PC-3 (cell line): ENCODE measurements at regions of chr22 and their contacts with region 1.

Region 1: DNA sequence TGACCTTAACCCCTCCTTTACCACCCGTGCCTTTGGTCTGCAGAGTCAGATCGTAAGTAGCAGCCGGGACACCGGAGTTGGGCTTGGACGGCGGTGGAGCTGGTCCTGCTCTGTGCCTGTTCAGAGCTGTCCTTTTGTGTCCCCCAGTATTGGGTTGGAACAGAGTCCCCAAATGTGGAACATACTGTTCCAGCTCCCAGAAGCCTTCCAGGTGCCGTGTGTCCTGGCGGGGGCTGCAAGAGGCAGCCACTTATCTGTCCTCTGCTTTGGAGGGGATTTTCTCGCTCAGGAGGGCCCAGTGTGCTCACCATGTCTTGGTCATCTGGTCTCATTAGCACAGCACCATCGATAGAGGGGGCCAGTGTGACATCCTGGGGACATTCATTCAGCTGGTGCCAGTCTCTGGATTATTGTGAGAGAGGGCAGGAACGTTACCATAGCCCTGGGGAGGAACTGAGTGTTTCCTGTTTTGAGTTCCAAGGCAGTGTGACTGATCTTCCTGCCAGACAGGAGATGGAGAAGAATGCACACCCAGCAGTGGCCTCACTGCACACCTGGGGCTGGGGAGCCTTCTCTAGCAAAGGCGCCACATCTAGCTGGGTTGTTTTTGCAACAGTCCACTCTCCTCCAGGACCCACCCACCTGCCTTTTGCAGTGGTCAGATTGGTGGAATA is 12.4 kb downstream of the CRELD2 start:
- DNase-seq: peak; percentile 85
- ATAC-seq: peak; percentile 76
- H3K4me3 ChIP-seq: no peak overlapping the region
- H3K27ac ChIP-seq: no peak overlapping the region
- H3K4me1 ChIP-seq: peaks cover 18% of the 10 kb centered on the region
- H3K27me3 ChIP-seq: no peaks in the 10 kb centered on the region
- CTCF ChIP-seq: peak; percentile 78

Region 2: GRCh38 chr22:49894322-49895054 is 36.4 kb before region 1 on chr22:
- CTCF ChIA-PET with region 1: no interaction called
- POLR2A ChIA-PET with region 1: no interaction called
- intact Hi-C with region 1: no loop called
- DNase-seq: no peak
- ATAC-seq: no peak
- H3K4me3 ChIP-seq: no peak overlapping the region
- H3K27ac ChIP-seq: no peak overlapping the region
- H3K4me1 ChIP-seq: no peaks in the 10 kb centered on the region
- H3K27me3 ChIP-seq: no peaks in the 10 kb centered on the region
- CTCF ChIP-seq: no peak

Region 3: GRCh38 chr22:49951981-49952891 is 21.4 kb after region 1 on chr22:
- CTCF ChIA-PET with region 1: interaction called, 14 read pairs
- POLR2A ChIA-PET with region 1: no interaction called
- intact Hi-C with region 1: no loop called
- DNase-seq: peak; percentile 36
- ATAC-seq: no peak
- H3K4me3 ChIP-seq: no peak overlapping the region
- H3K27ac ChIP-seq: peak overlapping the region; percentile 82
- H3K4me1 ChIP-seq: peaks cover 42% of the 10 kb centered on the region
- H3K27me3 ChIP-seq: no peaks in the 10 kb centered on the region
- CTCF ChIP-seq: no peak

Region 4: DNA sequence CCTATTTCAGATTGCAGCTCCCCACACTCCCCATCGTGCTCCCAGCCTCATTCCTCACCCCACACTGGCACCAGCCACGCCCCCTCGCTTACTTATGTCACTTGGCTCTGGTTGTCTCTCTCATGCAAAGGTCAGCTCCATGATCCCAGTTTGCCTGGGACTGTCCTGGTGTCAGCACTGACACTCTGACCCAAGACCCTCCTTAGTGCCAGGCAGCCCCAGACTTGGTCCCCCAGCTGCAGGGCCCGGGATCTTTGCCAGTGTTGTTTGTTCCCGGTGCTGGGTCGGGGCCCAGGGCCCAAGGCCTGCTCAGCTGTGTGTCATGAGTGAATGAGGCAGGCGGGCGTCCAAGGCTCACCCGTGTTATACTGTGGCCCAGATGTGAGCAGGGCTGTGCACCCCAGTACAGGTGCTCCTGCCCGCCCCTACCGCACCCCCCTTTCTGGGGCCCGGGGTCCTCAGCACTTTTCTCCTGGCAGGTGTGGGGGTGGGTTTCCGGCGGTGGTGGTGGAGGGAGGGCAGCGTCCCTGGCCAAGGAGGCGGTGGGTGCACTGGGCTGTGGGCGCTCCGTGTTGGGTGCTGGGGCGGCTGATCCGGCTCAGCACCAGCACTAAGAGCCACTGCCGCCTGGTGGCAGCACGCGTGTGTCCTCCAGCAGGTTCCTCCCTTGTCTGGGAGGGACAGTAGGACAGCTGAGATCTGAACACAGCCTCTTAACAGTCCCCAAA is 62.2 kb after region 1 on chr22:
- CTCF ChIA-PET with region 1: no interaction called
- POLR2A ChIA-PET with region 1: no interaction called
- intact Hi-C with region 1: loop called (anchors 5 kb)
- DNase-seq: peak; percentile 60
- ATAC-seq: peak; percentile 90
- H3K4me3 ChIP-seq: no peak overlapping the region
- H3K27ac ChIP-seq: no peak overlapping the region
- H3K4me1 ChIP-seq: no peaks in the 10 kb centered on the region
- H3K27me3 ChIP-seq: no peaks in the 10 kb centered on the region
- CTCF ChIP-seq: peak; percentile 71

Region 5: GRCh38 chr22:50141891-50142363 is 211.1 kb after region 1 on chr22:
- CTCF ChIA-PET with region 1: no interaction called
- POLR2A ChIA-PET with region 1: no interaction called
- intact Hi-C with region 1: loop called (anchors 5 kb)
- DNase-seq: no peak
- ATAC-seq: no peak
- H3K4me3 ChIP-seq: no peak overlapping the region
- H3K27ac ChIP-seq: no peak overlapping the region
- H3K4me1 ChIP-seq: no peaks in the 10 kb centered on the region; the same call in 1 of the 2 replicates
- H3K27me3 ChIP-seq: no peaks in the 10 kb centered on the region
- CTCF ChIP-seq: peak; percentile 21